WTC11 (cell line): ENCODE measurements at regions of chr18 and their contacts with region 1.

Region 1: GRCh38 chr18:3481696-3482210 is 31.8 kb downstream of the TGIF1 start:
- DNase-seq: peak; percentile 52
- ATAC-seq: peak; percentile 94
- H3K4me3 Mint-ChIP-seq: no peak overlapping the region
- H3K27ac Mint-ChIP-seq: peak overlapping the region; percentile 71; the same call in 1 of the 2 replicates
- H3K4me1 Mint-ChIP-seq: peaks cover 28% of the 10 kb centered on the region
- H3K27me3 Mint-ChIP-seq: no peaks in the 10 kb centered on the region
- CTCF ChIP-seq: peak; percentile 36; the same call in 1 of the 2 replicates

Region 2: GRCh38 chr18:3466045-3466444 is 15.7 kb before region 1 on chr18:
- CTCF ChIA-PET with region 1: interaction called, 39 read pairs
- POLR2A ChIA-PET with region 1: no interaction called
- DNase-seq: no peak
- ATAC-seq: no peak
- H3K4me3 Mint-ChIP-seq: no peak overlapping the region
- H3K27ac Mint-ChIP-seq: peak overlapping the region; percentile 97
- H3K4me1 Mint-ChIP-seq: peaks cover 52% of the 10 kb centered on the region
- H3K27me3 Mint-ChIP-seq: no peaks in the 10 kb centered on the region
- CTCF ChIP-seq: no peak

Region 3: GRCh38 chr18:3493501-3494244 is 11.9 kb after region 1 on chr18:
- CTCF ChIA-PET with region 1: interaction called, 11 read pairs
- POLR2A ChIA-PET with region 1: interaction called, 3 read pairs
- DNase-seq: no peak
- ATAC-seq: peak; percentile 28; the same call in 1 of the 2 replicates
- H3K4me3 Mint-ChIP-seq: no peak overlapping the region
- H3K27ac Mint-ChIP-seq: peak overlapping the region; percentile 50
- H3K4me1 Mint-ChIP-seq: peaks cover 47% of the 10 kb centered on the region
- H3K27me3 Mint-ChIP-seq: peaks cover 8% of the 10 kb centered on the region
- CTCF ChIP-seq: no peak

Region 4: GRCh38 chr18:3498698-3499471 is 17.1 kb after region 1 on chr18:
- CTCF ChIA-PET with region 1: interaction called, 10 read pairs
- POLR2A ChIA-PET with region 1: no interaction called
- DNase-seq: peak; percentile 78
- ATAC-seq: peak; percentile 82
- H3K4me3 Mint-ChIP-seq: peak overlapping the region; percentile 79
- H3K27ac Mint-ChIP-seq: peak overlapping the region; percentile 38; the same call in 1 of the 2 replicates
- H3K4me1 Mint-ChIP-seq: peaks cover 37% of the 10 kb centered on the region
- H3K27me3 Mint-ChIP-seq: peaks cover 10% of the 10 kb centered on the region
- CTCF ChIP-seq: no peak